ENCODE measurements at regions of chr4 and their contacts with region 1.

Region 1: GRCh38 chr4:7067452-7068278 is at the start of gene GRPEL1:
- DNase-seq: peak; percentile 100
- ATAC-seq: peak; percentile 91
- H3K4me3 Mint-ChIP-seq: peak within 1 kb of the TSS; percentile 95
- H3K27ac Mint-ChIP-seq: peak within 1 kb of the TSS; percentile 90
- H3K4me1 Mint-ChIP-seq: peaks cover 44% of the 10 kb centered on the region
- H3K27me3 Mint-ChIP-seq: no peaks in the 10 kb centered on the region
- CTCF ChIP-seq: no peak
- total RNA-seq, gene GRPEL1: 31.8 and 41.3 TPM in 2 replicates

Region 2: DNA sequence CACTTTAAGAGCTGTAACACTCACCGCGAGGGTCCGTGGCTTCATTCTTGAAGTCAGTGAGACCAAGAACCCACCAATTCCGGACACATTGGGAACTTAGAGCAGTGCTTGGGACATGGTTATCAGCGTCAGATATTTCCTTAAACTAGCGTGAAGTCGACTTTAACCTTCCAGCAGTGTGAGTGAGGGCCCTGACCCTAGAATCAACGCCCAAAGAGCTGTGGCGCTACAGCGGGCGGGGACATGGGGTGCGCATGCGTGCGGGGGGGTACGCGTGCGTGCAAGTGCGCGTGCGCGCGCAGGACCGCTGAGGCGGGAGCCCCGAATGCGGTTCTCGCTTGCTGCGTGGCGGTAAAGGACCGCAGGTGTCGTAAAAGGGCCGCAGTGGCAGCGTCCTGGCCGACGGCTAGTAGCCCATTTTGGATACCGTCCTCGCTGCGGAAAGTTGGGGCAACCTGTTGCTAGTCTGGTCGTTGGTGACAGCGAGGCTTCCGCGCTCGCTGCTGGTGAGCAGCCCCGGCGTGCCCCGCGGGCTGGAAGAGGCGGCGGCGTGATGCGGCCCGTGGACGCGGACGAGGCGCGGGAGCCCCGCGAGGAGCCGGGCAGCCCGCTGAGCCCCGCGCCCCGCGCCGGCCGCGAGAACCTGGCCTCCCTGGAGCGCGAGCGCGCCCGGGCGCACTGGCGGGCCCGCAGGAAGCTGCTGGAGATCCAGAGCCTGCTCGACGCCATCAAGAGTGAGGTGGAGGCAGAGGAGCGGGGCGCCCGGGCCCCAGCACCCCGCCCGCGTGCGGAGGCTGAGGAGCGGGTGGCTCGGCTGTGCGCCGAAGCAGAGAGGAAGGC is 393.8 kb before region 1 on chr4:
- CTCF ChIA-PET with region 1: interaction called, 5 read pairs
- POLR2A ChIA-PET with region 1: interaction called, 10 read pairs
- intact Hi-C with region 1: loop called (anchors 1 kb)
- DNase-seq: peak; percentile 93
- ATAC-seq: peak; percentile 88
- H3K4me3 Mint-ChIP-seq: peak overlapping the region; percentile 91
- H3K27ac Mint-ChIP-seq: peak overlapping the region; percentile 96
- H3K4me1 Mint-ChIP-seq: peaks cover 55% of the 10 kb centered on the region
- H3K27me3 Mint-ChIP-seq: no peaks in the 10 kb centered on the region
- CTCF ChIP-seq: no peak

Region 3: GRCh38 chr4:6783053-6783981 is 284.3 kb before region 1 on chr4:
- CTCF ChIA-PET with region 1: no interaction called
- POLR2A ChIA-PET with region 1: interaction called, 7 read pairs
- intact Hi-C with region 1: loop called (anchors 1 kb)
- DNase-seq: peak; percentile 88
- ATAC-seq: peak; percentile 67
- H3K4me3 Mint-ChIP-seq: peak overlapping the region; percentile 84
- H3K27ac Mint-ChIP-seq: peak overlapping the region; percentile 78
- H3K4me1 Mint-ChIP-seq: peaks cover 22% of the 10 kb centered on the region
- H3K27me3 Mint-ChIP-seq: no peaks in the 10 kb centered on the region
- CTCF ChIP-seq: no peak

Region 4: DNA sequence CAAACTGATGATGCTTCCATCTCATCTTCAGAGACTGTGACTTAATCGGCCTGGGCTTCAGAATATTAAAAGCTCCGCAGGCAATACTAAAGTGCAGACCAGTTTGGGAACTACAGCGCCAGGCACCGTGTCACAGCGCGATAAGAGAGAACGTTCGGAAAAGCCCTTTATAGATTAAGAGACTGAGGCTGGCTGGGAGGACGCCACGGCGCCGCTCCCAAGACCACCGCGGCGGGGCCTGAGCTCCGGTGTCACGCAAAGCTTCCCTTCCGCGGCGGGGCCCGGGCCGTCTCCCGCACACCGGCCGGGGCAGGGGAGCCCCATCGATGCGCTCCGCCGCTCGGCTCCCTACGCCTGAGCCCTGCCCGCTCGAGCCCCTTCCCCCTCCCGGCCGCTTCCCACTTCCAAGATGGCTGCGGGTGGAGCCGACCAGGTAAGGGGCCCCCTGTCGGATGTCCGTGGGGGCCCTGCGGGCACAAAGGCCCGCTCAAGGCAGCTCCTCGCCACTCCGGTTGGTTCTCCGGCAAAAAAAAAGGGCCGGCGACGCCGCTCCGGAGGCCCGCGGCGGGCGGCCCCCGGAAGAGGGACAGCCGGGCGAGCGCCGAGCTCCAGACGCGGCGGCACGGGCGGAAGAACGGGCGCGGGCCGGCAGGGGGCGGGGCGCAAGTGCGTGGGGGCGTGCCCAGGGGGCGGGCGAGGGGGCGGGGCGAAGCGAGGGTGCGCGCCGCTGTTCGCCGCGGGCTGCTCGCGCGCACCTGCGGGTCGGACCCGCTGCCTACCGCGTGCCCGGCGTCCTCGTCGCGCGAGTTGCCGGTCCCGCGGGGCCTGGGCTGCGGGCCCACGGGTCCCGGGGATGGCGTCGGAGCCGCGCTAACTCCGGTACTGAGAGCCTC is 158.3 kb before region 1 on chr4 and contains the start of gene TBC1D14:
- CTCF ChIA-PET with region 1: interaction called, 15 read pairs
- POLR2A ChIA-PET with region 1: interaction called, 55 read pairs
- intact Hi-C with region 1: loop called (anchors 1 kb)
- DNase-seq: peak; percentile 88
- ATAC-seq: peak; percentile 89
- H3K4me3 Mint-ChIP-seq: peak within 1 kb of the TSS; percentile 87
- H3K27ac Mint-ChIP-seq: peak within 1 kb of the TSS; percentile 86
- H3K4me1 Mint-ChIP-seq: peaks cover 43% of the 10 kb centered on the region
- H3K27me3 Mint-ChIP-seq: peaks cover 5% of the 10 kb centered on the region
- CTCF ChIP-seq: no peak
- total RNA-seq, gene TBC1D14: 35.1 and 35.2 TPM in 2 replicates

Region 5: DNA sequence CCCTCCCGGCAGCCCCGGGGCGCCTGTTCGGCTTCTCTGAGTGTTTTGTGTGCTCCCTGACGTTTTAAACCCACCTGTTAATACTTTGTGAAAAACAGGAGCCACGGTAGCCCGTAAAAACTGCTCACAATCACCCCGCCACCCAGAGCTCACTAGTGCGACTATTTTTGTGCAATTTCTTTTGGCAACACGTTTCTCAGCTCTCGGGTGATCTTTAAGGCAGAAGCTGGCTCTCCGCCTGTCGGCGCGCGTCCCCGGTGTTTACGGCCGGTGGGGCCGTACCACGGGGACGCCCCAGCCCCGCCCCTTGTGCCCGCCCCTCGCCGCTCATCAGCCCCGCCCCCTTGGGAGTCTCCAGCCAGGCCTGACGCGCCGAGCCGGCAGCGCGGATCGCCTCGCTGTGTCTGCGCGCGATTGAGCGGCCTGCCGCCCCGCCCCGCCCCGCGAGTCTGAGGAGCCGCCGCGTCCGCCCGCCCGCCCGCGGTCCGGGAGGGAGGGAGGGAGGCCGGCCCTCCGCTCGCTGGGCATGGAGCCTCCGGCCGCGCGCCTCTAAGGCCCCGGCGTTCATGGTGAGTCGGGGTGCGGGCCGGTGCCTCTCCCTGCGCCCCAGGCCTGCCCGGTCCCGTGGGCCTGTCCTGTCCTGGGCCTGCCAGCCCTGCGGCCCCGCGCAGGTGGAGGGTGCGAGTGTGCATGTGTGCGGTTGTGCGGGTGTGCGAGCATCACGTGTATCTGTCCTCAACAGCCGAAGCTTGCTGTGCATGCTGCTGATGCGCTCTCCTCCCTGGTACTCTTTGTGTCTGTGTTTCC is 80.7 kb before region 1 on chr4:
- CTCF ChIA-PET with region 1: interaction called, 5 read pairs
- POLR2A ChIA-PET with region 1: interaction called, 32 read pairs
- intact Hi-C with region 1: loop called (anchors 1 kb)
- DNase-seq: peak; percentile 90
- ATAC-seq: peak; percentile 92
- H3K4me3 Mint-ChIP-seq: peak overlapping the region; percentile 94
- H3K27ac Mint-ChIP-seq: peak overlapping the region; percentile 98
- H3K4me1 Mint-ChIP-seq: peaks cover 74% of the 10 kb centered on the region
- H3K27me3 Mint-ChIP-seq: no peaks in the 10 kb centered on the region
- CTCF ChIP-seq: no peak

Region 6: GRCh38 chr4:7103031-7103606 is 35.5 kb after region 1 on chr4:
- CTCF ChIA-PET with region 1: interaction called, 4 read pairs
- POLR2A ChIA-PET with region 1: interaction called, 3 read pairs
- intact Hi-C with region 1: loop called (anchors 1 kb)
- DNase-seq: peak; percentile 65
- ATAC-seq: peak; percentile 96
- H3K4me3 Mint-ChIP-seq: peak overlapping the region; percentile 91
- H3K27ac Mint-ChIP-seq: peak overlapping the region; percentile 46
- H3K4me1 Mint-ChIP-seq: peaks cover 20% of the 10 kb centered on the region
- H3K27me3 Mint-ChIP-seq: peaks cover under 1% of the 10 kb centered on the region
- CTCF ChIP-seq: no peak

Region 7: DNA sequence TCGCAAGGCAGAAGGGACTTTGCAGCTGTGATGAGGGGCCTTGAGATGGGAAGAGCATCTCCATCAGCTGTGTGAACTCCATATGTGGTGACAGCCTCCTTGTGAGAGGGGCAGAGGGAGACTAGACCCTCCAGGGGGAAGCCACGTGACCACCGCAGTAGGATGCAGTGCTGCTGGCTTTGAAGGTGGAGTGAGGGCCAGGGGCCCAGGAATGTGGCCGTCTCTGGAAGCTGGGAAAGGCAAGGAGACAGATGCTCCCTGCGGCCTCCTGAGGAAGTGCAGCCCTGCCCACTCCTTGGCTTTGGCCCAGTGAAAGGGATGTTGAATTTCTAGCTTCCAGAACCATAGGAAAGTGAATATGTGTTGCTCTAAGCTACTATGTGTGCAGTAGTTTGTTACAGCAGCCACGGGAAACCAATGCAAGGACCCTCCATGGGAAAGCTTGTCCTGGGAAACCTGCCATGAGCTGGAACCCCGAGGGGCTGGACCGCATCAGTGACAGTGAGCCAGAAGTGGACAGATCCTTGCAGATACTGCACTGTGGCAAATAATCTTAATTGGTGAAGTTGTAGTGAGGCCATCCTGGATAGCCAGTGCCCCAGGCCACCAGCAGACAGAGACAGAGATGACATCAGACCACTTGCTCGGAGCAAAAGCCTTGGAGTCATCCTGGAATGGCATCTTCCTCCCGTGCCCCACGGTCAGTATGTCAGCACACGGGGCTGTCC is 89.3 kb after region 1 on chr4:
- CTCF ChIA-PET with region 1: no interaction called
- POLR2A ChIA-PET with region 1: no interaction called
- intact Hi-C with region 1: no loop called
- DNase-seq: no peak
- ATAC-seq: no peak
- H3K4me3 Mint-ChIP-seq: no peak overlapping the region
- H3K27ac Mint-ChIP-seq: no peak overlapping the region
- H3K4me1 Mint-ChIP-seq: no peaks in the 10 kb centered on the region
- H3K27me3 Mint-ChIP-seq: peaks cover 21% of the 10 kb centered on the region
- CTCF ChIP-seq: no peak

Measured in activated B cell treated with CpG ODN at 0.5 μM for 24 hours (primary cell).